RWPE1 (cell line): ENCODE measurements at regions of chr3 and their contacts with region 1.

Region 1: GRCh38 chr3:97201814-97202213 is 387.4 kb downstream of the EPHA6 start:
- DNase-seq: no peak
- H3K27ac ChIP-seq: no peak overlapping the region
- CTCF ChIP-seq: no peak

Region 2: DNA sequence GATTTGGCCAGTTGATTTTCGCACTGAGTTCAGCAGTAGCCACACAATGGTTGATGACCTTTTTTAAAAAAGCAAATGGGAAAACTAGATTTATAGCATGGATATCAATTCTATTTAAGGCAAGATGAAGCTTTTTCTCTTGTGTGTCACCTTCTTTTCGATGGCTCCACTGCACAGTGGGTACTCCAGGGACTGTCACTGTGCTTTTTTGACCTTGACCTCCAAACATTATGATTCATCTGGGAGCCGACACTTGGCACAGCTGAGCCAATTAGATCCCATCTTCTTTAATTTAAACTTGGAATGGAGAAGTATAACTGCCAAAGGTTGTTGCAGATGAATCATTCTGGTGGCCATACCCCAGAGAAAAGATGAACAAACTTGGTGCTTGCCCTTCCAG is 20.1 kb before region 1 on chr3:
- CTCF ChIA-PET with region 1: interaction called, 10 read pairs
- POLR2A ChIA-PET with region 1: no interaction called
- DNase-seq: no peak
- H3K27ac ChIP-seq: no peak overlapping the region
- CTCF ChIP-seq: no peak